ENCODE measurements at regions of chr20 and their contacts with region 1.

Region 1: GRCh38 chr20:63520504-63520933 is at the start of gene PPDPF:
- DNase-seq: peak; percentile 100
- H3K4me3 ChIP-seq: peak within 1 kb of the TSS; percentile 84 to 85
- H3K27ac ChIP-seq: peak within 1 kb of the TSS; percentile 66 to 81
- H3K4me1 ChIP-seq: peaks cover 4 to 26% of the 10 kb centered on the region in 2 experiments; a peak in 3 of 4 replicates
- H3K27me3 ChIP-seq: no peaks in the 10 kb centered on the region
- CTCF ChIP-seq: no peak
- EP300 ChIP-seq: no peak
- RAD21 ChIP-seq: no peak
- polyA plus RNA-seq, gene PPDPF: 20.0 and 71.4 TPM in 2 replicates

Region 2: GRCh38 chr20:63463400-63464288 is 56.9 kb before region 1 on chr20:
- CTCF ChIA-PET with region 1: interaction called, 12 read pairs
- POLR2A ChIA-PET with region 1: interaction called, 14 read pairs
- DNase-seq: peak; percentile 88
- H3K4me3 ChIP-seq: no peak overlapping the region; a peak in 1 of 4 replicates
- H3K27ac ChIP-seq: peak overlapping the region in 1 of 2 experiments; percentile 97; a peak in 2 of 4 replicates
- H3K4me1 ChIP-seq: peaks cover 0 to 95% of the 10 kb centered on the region in 2 experiments; a peak in 2 of 4 replicates
- H3K27me3 ChIP-seq: peaks cover 17% of the 10 kb centered on the region
- CTCF ChIP-seq: no peak
- EP300 ChIP-seq: peak in 1 of 2 experiments; percentile 48; a peak in 1 of 4 replicates
- RAD21 ChIP-seq: no peak; the same call in 1 of the 2 replicates

Region 3: GRCh38 chr20:63501818-63502670 is 18.5 kb before region 1 on chr20:
- CTCF ChIA-PET with region 1: interaction called, 76 read pairs
- POLR2A ChIA-PET with region 1: interaction called, 31 read pairs
- DNase-seq: peak; percentile 94
- H3K4me3 ChIP-seq: no peak overlapping the region
- H3K27ac ChIP-seq: peak overlapping the region in 1 of 2 experiments; percentile 92; a peak in 2 of 4 replicates
- H3K4me1 ChIP-seq: peaks cover 0 to 37% of the 10 kb centered on the region in 2 experiments; a peak in 1 of 4 replicates
- H3K27me3 ChIP-seq: no peaks in the 10 kb centered on the region
- CTCF ChIP-seq: no peak
- EP300 ChIP-seq: no peak
- RAD21 ChIP-seq: no peak

Measured in SK-N-SH (cell line).